Left cardiac atrium (tissue), 4 donors: ENCODE measurements at regions of chr14 and their contacts with region 1.

Region 1: DNA sequence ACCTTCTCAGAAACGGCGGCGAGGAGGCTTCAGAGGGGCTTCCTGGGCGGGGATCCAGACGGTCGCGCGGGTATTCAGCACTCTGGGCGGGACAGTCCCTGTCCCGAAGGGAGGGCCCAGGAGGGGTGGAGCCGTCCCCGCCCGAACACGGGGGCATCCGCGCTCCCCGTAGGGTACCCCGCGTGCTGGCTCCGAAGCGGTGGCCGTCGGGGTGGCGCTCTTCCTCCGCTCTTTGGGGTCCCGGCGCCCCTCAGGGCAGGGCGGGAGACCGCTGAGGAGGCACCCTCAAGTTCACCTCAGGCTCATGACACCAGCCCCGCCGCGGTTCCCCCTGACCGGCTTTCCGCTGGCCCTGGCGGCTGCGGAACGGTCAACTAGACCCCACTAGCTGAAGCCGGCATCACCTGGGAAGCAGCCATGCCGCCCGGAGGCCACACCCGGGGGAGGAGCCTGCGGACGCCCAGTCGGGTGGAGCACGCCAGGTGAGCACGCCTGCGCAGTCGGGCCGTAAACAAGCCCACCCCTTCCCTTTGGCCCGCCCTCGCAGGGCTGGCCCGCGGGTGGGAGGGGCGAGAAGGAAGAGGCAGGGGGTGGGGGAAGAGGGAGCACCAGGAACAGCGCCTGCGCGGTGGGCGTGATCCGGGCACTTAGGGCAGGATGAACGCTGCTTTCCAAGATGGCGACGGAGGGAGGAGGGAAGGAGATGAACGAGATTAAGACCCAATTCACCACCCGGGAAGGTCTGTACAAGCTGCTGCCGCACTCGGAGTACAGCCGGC is at the start of gene WDR20:
- DNase-seq: peak; percentile 98
- ATAC-seq: peak; percentile 99
- total RNA-seq, gene WDR20: 23.3 to 23.7 TPM

Region 2: DNA sequence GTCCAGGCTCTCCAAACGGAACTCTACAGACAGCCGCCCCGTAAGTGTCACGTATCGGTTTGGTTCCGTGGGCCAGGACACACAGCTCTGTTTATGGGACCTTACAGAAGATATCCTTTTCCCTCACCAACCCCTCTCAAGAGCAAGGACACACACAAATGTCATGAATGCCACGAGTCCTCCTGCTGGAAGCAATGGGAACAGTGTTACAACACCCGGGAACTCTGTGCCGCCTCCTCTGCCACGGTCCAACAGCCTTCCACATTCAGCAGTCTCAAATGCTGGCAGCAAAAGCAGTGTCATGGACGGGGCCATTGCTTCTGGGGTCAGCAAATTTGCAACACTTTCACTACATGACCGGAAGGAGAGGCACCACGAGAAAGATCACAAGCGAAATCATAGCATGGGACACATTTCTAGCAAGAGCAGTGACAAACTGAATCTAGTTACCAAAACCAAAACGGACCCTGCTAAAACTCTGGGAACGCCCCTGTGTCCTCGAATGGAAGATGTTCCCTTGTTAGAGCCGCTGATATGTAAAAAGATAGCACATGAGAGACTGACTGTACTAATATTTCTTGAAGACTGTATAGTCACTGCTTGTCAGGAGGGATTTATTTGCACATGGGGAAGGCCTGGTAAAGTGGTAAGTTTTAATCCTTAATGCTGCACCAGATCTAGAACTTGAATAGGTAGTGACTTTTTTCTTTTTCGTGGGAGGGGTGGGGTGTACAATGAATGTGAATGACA is 70.0 kb after region 1 on chr14:
- intact Hi-C with region 1: loop called in 1 of 2 experiments (anchors 10 kb)
- DNase-seq: no peak
- ATAC-seq: peak; percentile 62 to 84

Region 3: DNA sequence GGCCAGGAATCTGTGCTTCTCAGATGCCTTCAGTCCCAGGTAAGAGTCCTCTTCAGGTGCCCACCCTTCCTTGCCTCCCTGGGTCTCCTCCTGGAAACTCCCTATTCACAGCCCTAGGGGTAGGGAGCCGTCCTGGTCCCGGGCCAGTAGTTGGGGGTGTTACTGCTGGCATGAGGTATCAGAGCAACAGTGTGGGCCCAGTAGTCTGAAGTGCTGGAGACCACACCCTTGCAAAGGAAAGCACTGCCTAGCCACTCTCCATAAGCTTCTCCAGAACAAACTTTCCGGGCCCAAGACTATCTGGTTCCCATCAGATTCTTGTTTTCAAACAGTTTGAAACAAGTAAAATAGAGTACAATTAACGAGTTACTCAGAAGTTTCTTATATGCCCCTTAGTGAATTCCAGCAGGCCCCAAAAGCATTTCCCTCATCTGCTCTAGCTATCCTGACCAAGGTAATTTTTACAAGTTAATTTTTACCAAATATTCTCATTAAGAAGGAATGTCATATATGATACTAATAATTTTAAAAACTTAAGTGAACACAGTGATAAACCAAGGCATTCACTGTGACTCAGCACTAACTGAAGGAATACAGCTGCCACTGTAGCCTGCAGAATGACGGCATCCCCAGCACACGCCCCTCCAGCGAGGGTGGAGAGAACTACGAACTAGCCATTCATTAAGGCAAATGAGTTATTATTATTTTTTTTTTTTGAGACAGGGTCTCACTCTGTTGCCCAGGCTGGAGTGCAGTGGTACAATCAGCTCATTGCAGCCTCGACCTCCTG is 116.2 kb after region 1 on chr14:
- intact Hi-C with region 1: no loop called
- DNase-seq: peak; percentile 64
- ATAC-seq: peak; percentile 50 to 92